ENCODE measurements at regions of chr7 and their contacts with region 1.

Region 1: DNA sequence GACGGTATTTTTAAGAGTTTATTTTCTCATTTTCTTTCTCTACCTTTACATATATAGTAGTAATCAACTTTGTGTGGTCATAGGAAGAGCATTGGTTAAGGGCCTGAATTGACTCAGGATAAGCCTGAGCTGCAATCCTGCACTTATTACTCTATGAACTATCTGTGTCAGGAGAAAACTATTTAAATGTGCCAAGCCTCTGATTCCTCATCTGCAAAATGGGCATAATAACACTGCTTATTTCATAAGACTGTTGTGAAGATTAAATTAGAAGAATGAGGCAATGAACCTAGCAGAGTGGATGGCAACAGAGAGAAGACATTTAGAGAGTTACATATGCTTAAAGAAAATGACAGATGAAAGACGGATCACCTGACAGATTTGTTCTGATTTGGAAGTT is 175.5 kb downstream of the RELN start:
- DNase-seq: no peak
- H3K4me3 ChIP-seq: no peak overlapping the region
- CTCF ChIP-seq: no peak
- POLR2A ChIP-seq: no peak

Region 2: GRCh38 chr7:103843689-103844480 is 29.9 kb after region 1 on chr7:
- intact Hi-C with region 1: loop called (anchors 1 kb)
- DNase-seq: no peak
- H3K4me3 ChIP-seq: no peak overlapping the region
- CTCF ChIP-seq: no peak
- POLR2A ChIP-seq: no peak

Measured in lower leg skin (tissue), 4 donors.